ENCODE measurements at regions of chr17 and their contacts with region 1.

Region 1: GRCh38 chr17:44308320-44308818 is at the start of gene RUNDC3A:
- DNase-seq: peak; percentile 89
- ATAC-seq: peak; percentile 96 to 99 (median 98)
- H3K4me3 ChIP-seq: peak within 1 kb of the TSS; percentile 7 to 64 (median 52)
- H3K27ac ChIP-seq: peak within 1 kb of the TSS in 3 of 10 donors; percentile 26 to 53 (median 49)
- H3K4me1 ChIP-seq: peaks cover 4 to 24% (median 17%) of the 10 kb centered on the region in 9 donors
- H3K27me3 ChIP-seq: peaks cover 0 to 54% (median 27%) of the 10 kb centered on the region in 7 donors
- CTCF ChIP-seq: no peak
- total RNA-seq, gene RUNDC3A: 0.15 to 1.9 (median 0.69) TPM in 9 of 10 donors, not detected in the other

Region 2: GRCh38 chr17:44230140-44230539 is 78.2 kb before region 1 on chr17:
- intact Hi-C with region 1: loop called in 1 of 10 experiments (anchors 5 kb)
- DNase-seq: peak in 1 of 2 donors; percentile 38
- ATAC-seq: peak in 7 of 8 donors; percentile 21 to 76 (median 62)
- H3K4me3 ChIP-seq: no peak overlapping the region
- H3K27ac ChIP-seq: peak overlapping the region in 3 of 10 donors; percentile 5 to 31 (median 9)
- H3K4me1 ChIP-seq: peaks cover 0 to 18% (median 6%) of the 10 kb centered on the region in 9 donors
- H3K27me3 ChIP-seq: no peaks in the 10 kb centered on the region
- CTCF ChIP-seq: no peak

Region 3: GRCh38 chr17:44350733-44351226 is 42.4 kb after region 1 on chr17:
- intact Hi-C with region 1: no loop called
- DNase-seq: peak; percentile 56 to 70
- ATAC-seq: peak in 7 of 8 donors; percentile 15 to 72 (median 69)
- H3K4me3 ChIP-seq: no peak overlapping the region
- H3K27ac ChIP-seq: no peak overlapping the region
- H3K4me1 ChIP-seq: peaks cover 0 to 39% (median 6%) of the 10 kb centered on the region in 9 donors
- H3K27me3 ChIP-seq: no peaks in the 10 kb centered on the region
- CTCF ChIP-seq: peak; percentile 56 to 85 (median 73)

Region 4: GRCh38 chr17:44487170-44487569 is 178.8 kb after region 1 on chr17:
- intact Hi-C with region 1: no loop called
- DNase-seq: no peak
- ATAC-seq: no peak
- H3K4me3 ChIP-seq: no peak overlapping the region
- H3K27ac ChIP-seq: no peak overlapping the region
- H3K4me1 ChIP-seq: peaks cover 0 to 4% (median 0%) of the 10 kb centered on the region in 9 donors
- H3K27me3 ChIP-seq: no peaks in the 10 kb centered on the region
- CTCF ChIP-seq: no peak

Region 5: DNA sequence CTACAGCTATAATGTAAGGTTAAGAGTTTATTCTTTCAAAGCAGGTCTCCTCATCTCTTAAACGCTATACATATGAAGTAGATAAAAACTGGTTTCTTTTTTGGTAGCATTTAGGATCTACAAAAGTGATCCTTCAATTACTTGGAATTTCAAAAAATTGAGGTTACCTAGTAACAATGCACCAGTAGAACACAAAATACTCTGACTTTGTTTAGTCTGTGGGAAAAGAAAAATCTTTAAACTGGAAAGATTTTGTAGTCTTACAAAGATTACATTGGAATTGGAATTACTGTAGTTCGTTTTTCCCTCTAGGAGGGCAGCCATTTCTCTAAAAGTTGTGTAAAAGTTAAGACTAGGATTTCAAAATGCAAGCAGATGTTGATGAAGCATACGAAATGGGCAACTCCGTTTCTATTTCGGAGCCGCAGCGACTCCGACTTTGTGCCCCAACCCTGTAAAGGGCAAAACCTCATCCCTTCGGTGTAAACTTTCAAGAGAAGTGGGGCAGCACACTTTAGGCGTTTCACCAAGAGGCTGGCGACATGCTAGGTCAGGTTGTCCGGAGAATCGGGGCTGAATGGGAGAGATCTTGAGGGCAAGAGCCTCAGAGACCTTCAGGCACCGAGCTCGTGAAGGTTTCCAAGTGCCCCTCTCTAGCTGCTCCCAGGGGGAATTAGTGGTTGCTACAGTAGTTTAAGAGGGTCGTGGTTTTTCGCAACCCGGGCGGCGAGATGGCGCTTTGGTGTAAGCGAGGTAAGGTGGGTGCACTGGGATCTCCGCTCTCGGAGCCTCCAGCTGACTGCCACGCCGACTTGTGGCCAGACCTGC is 852.0 kb after region 1 on chr17:
- intact Hi-C with region 1: no loop called
- DNase-seq: no peak
- ATAC-seq: peak in 4 of 8 donors; percentile 0 to 1 (median 1)
- H3K4me3 ChIP-seq: peak overlapping the region; percentile 79 to 98 (median 94)
- H3K27ac ChIP-seq: peak overlapping the region; percentile 99 to 100 (median 100)
- H3K4me1 ChIP-seq: peaks cover 10 to 55% (median 47%) of the 10 kb centered on the region in 9 donors
- H3K27me3 ChIP-seq: no peaks in the 10 kb centered on the region
- CTCF ChIP-seq: peak in 3 of 9 donors; percentile 18 to 52 (median 27)